Caco-2 (cell line): ENCODE measurements at regions of chr11 and their contacts with region 1.

Region 1: GRCh38 chr11:17267561-17267960 is 9.0 kb upstream of the NUCB2 start:
- DNase-seq: no peak
- H3K4me3 ChIP-seq: no peak overlapping the region
- H3K4me3 Mint-ChIP-seq: no peak overlapping the region
- H3K27ac Mint-ChIP-seq: no peak overlapping the region
- H3K4me1 ChIP-seq: no peaks in the 10 kb centered on the region
- H3K4me1 Mint-ChIP-seq: no peaks in the 10 kb centered on the region
- H3K27me3 ChIP-seq: no peaks in the 10 kb centered on the region
- H3K27me3 Mint-ChIP-seq: no peaks in the 10 kb centered on the region
- CTCF ChIP-seq: no peak

Region 2: DNA sequence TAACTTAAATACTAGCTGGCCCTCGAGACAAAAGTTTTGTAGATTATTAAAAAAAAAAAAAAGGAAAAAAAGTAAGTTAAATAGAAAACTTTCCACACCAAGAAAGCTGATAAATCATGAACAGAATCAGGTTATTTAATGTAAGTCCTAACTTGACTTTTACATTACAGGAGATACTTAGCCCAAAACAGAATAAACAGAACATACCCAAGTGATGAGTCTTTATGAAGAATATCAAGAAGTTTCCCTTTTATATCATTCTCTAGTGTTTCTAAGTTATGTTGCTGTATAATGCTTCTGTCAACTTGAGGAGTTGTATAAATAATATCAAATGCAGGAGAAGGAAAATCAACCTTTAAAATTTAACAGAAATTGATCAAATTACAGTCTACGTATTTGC is 145.6 kb before region 1 on chr11:
- CTCF ChIA-PET with region 1: no interaction called
- POLR2A ChIA-PET with region 1: no interaction called
- intact Hi-C with region 1: no loop called
- DNase-seq: no peak
- H3K4me3 ChIP-seq: no peak overlapping the region
- H3K4me3 Mint-ChIP-seq: no peak overlapping the region
- H3K27ac Mint-ChIP-seq: no peak overlapping the region
- H3K4me1 ChIP-seq: no peaks in the 10 kb centered on the region
- H3K4me1 Mint-ChIP-seq: no peaks in the 10 kb centered on the region
- H3K27me3 ChIP-seq: no peaks in the 10 kb centered on the region
- H3K27me3 Mint-ChIP-seq: no peaks in the 10 kb centered on the region
- CTCF ChIP-seq: no peak

Region 3: GRCh38 chr11:18383388-18384156 is 1116.0 kb after region 1 on chr11:
- CTCF ChIA-PET with region 1: no interaction called
- POLR2A ChIA-PET with region 1: interaction called, 11 read pairs
- intact Hi-C with region 1: no loop called
- DNase-seq: peak; percentile 54 to 81
- H3K4me3 ChIP-seq: no peak overlapping the region
- H3K4me3 Mint-ChIP-seq: peak overlapping the region; percentile 48
- H3K27ac Mint-ChIP-seq: peak overlapping the region; percentile 90
- H3K4me1 ChIP-seq: peaks cover 21% of the 10 kb centered on the region
- H3K4me1 Mint-ChIP-seq: peaks cover 17% of the 10 kb centered on the region
- H3K27me3 ChIP-seq: no peaks in the 10 kb centered on the region
- H3K27me3 Mint-ChIP-seq: no peaks in the 10 kb centered on the region
- CTCF ChIP-seq: no peak